ENCODE measurements at regions of chr13 and their contacts with region 1.

Region 1: DNA sequence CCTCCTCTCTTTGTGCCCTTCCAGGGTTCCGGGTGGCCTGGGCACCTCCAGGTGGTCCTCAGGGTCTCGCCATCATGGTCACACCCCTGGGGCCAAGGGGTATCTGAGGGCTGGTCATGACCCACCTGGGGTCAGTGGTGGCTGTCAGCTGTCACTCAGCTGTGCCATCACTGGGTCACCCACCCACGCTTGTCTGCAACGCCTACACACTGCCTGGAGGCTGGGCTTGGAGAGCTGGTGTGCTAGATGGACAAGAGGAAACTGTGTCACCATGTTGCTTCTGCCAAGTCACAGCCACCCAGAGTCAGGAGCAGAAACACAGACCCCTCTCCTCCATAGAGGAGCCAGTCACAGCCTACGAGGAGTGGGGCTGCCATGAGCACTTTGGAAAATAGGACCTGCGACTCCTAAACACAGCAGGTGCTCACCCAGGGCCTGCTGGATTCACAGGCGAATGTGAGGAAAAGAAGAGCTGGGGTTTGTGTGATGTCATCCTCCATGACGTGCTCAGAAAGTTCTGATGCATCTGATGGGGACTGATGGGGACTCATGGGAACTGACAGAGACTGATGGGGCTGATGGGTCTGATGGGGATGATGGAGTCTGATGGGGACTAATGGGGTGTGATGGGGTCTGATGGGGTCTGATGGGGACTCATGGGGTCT is 10.7 kb upstream of the GRTP1 start:
- DNase-seq: no peak
- ATAC-seq: no peak
- H3K4me3 ChIP-seq: no peak overlapping the region
- H3K27ac ChIP-seq: no peak overlapping the region
- H3K4me1 ChIP-seq: no peaks in the 10 kb centered on the region
- H3K27me3 ChIP-seq: no peaks in the 10 kb centered on the region
- CTCF ChIP-seq: no peak

Region 2: DNA sequence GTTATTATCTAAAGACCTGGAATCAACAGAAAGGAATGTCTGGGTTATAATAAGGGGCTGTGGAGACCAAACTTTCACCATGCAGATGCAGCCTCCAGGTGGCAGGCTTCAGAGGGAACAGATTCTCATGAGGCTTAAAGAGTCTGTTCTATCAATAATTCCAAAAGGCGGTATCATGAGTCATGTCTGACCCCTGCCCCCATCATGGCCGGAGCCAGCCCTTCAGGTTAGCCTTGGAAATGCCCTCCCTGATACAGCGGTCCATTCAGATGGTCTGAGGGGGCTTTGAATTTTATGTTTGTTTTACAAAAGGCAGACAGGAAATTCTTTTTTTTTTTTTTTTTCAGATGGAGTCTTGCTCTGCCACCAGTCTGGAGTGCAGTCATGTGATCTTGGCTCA is 99.3 kb before region 1 on chr13:
- CTCF ChIA-PET with region 1: interaction called, 6 read pairs
- POLR2A ChIA-PET with region 1: no interaction called
- intact Hi-C with region 1: loop called (anchors 1 kb)
- DNase-seq: peak; percentile 69
- ATAC-seq: peak; percentile 91
- H3K4me3 ChIP-seq: no peak overlapping the region
- H3K27ac ChIP-seq: no peak overlapping the region
- H3K4me1 ChIP-seq: peaks cover 7% of the 10 kb centered on the region; the same call in 1 of the 2 replicates
- H3K27me3 ChIP-seq: no peaks in the 10 kb centered on the region
- CTCF ChIP-seq: peak; percentile 63

Region 3: GRCh38 chr13:113327766-113328471 is 46.7 kb before region 1 on chr13:
- CTCF ChIA-PET with region 1: interaction called, 10 read pairs
- POLR2A ChIA-PET with region 1: no interaction called
- intact Hi-C with region 1: no loop called
- DNase-seq: no peak
- ATAC-seq: no peak
- H3K4me3 ChIP-seq: no peak overlapping the region
- H3K27ac ChIP-seq: no peak overlapping the region
- H3K4me1 ChIP-seq: peaks cover 11% of the 10 kb centered on the region
- H3K27me3 ChIP-seq: no peaks in the 10 kb centered on the region
- CTCF ChIP-seq: no peak

Region 4: GRCh38 chr13:113337976-113338375 is 36.7 kb before region 1 on chr13:
- CTCF ChIA-PET with region 1: no interaction called
- POLR2A ChIA-PET with region 1: no interaction called
- intact Hi-C with region 1: no loop called
- DNase-seq: no peak
- ATAC-seq: no peak
- H3K4me3 ChIP-seq: no peak overlapping the region
- H3K27ac ChIP-seq: no peak overlapping the region
- H3K4me1 ChIP-seq: no peaks in the 10 kb centered on the region
- H3K27me3 ChIP-seq: no peaks in the 10 kb centered on the region
- CTCF ChIP-seq: no peak

Region 5: DNA sequence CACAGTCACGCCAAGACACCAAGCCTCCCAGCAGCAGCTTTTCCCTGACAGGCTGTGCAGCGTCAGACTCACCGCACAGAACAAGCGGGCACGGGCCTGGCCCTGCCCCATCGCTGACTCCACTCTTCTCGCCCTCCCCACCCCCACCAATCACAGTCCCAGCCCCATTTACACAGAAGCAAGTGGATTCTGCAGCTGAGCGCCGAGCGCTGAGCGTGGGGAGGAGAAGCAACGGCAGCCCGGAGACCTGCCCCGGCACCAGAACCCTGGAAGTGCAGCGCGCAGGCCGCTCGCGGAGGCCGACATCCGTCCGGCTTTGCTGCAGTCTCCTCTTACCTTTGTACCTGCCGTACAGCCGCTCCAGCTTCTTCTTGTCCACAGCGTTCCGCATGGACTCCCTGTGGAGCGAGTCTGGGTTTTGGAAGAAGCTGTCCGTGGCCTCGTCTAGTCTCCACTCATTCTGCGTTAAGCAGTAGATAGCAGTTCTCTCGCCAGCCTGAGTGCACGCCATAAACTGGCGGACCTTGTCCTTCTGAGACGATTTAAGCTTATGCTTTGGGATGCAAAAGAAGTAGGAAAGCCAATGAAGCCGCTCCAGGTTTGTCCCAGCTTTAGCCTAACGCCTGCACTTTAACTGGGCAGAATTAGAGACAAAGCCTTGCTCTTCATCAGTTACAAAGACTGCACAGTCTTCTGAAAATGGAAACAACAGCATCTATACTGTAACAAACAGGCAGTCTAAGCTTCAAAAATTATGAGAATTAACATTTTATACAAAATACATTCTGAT is 109.1 kb after region 1 on chr13:
- CTCF ChIA-PET with region 1: no interaction called
- POLR2A ChIA-PET with region 1: no interaction called
- intact Hi-C with region 1: no loop called
- DNase-seq: no peak
- ATAC-seq: no peak
- H3K4me3 ChIP-seq: no peak overlapping the region
- H3K27ac ChIP-seq: no peak overlapping the region
- H3K4me1 ChIP-seq: peaks cover 9% of the 10 kb centered on the region
- H3K27me3 ChIP-seq: no peaks in the 10 kb centered on the region
- CTCF ChIP-seq: no peak